HepG2 (cell line): ENCODE measurements at regions of chr3 and their contacts with region 1.

Region 1: DNA sequence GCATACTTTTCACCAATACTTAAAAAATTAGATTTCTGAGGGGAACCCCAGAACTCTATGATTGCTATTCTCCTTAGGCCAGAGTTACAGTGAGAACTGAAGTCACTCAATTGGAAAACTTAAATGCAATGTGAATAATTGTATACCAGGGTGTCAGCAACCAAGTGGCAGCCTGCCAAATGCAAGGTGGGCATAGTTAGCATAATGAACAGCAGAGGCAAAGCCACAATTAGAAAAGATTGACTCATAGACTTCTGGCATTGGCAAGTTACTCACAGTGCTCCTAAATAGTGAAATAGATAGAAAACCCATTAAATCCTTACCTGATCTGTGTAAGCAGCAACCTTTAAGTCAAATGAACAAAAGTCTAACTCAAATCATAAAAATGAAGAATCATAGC is 94.9 kb downstream of the BCHE start:
- DNase-seq: no peak
- ATAC-seq: no peak
- H3K4me3 ChIP-seq: no peak overlapping the region
- H3K27ac ChIP-seq: no peak overlapping the region
- H3K4me1 ChIP-seq: no peaks in the 10 kb centered on the region
- H3K27me3 ChIP-seq: no peaks in the 10 kb centered on the region
- CTCF ChIP-seq: no peak
- EP300 ChIP-seq: no peak
- POLR2A ChIP-seq: no peak
- RAD21 ChIP-seq: no peak

Region 2: GRCh38 chr3:165725296-165725695 is 17.1 kb before region 1 on chr3:
- CTCF ChIA-PET with region 1: no interaction called
- POLR2A ChIA-PET with region 1: no interaction called
- in situ Hi-C with region 1: no loop called
- intact Hi-C with region 1: loop called (anchors 2 kb)
- DNase-seq: no peak
- ATAC-seq: no peak
- H3K4me3 ChIP-seq: no peak overlapping the region
- H3K27ac ChIP-seq: no peak overlapping the region
- H3K4me1 ChIP-seq: no peaks in the 10 kb centered on the region
- H3K27me3 ChIP-seq: no peaks in the 10 kb centered on the region
- CTCF ChIP-seq: no peak
- EP300 ChIP-seq: no peak
- POLR2A ChIP-seq: no peak
- RAD21 ChIP-seq: no peak

Region 3: GRCh38 chr3:165883866-165884478 is 141.6 kb after region 1 on chr3:
- CTCF ChIA-PET with region 1: no interaction called
- POLR2A ChIA-PET with region 1: no interaction called
- in situ Hi-C with region 1: no loop called
- intact Hi-C with region 1: no loop called
- DNase-seq: no peak
- ATAC-seq: no peak
- H3K4me3 ChIP-seq: no peak overlapping the region
- H3K27ac ChIP-seq: no peak overlapping the region
- H3K4me1 ChIP-seq: no peaks in the 10 kb centered on the region
- H3K27me3 ChIP-seq: no peaks in the 10 kb centered on the region
- CTCF ChIP-seq: no peak
- EP300 ChIP-seq: no peak
- POLR2A ChIP-seq: no peak
- RAD21 ChIP-seq: no peak